A549 (cell line): ENCODE measurements at regions of chr15 and their contacts with region 1.

Region 1: DNA sequence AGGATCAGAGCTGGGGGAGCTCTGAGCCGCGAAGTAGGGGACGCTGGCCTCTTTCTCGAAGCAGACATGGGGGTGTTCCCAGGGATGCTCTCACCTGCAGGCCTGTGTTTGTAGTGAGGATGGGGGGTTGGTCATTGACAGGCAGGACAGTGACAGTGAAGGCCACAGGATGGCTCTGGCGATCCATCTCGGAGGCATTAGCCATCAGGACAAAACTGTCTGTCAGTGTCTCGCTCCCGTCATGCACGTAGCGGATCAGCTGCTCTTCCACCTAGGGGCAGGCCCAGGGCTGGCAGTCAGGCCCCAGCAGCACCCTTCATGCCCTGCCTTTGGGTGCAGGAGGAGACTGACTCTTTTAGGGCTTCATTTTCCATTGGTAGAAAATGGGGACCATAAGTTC is 28.0 kb downstream of the CSPG4 start:
- DNase-seq: peak in 1 of 2 experiments; percentile 47
- ATAC-seq: no peak
- H3K4me3 ChIP-seq: no peak overlapping the region
- H3K27ac ChIP-seq: no peak overlapping the region
- H3K4me1 ChIP-seq: no peaks in the 10 kb centered on the region
- CTCF ChIP-seq: no peak
- EP300 ChIP-seq: no peak
- POLR2A ChIP-seq: no peak
- RAD21 ChIP-seq: peak in 1 of 2 experiments; percentile 25; a peak in 1 of 5 replicates

Region 2: GRCh38 chr15:75508840-75509532 is 175.7 kb before region 1 on chr15:
- CTCF ChIA-PET with region 1: interaction called, 14 read pairs
- POLR2A ChIA-PET with region 1: no interaction called
- DNase-seq: peak; percentile 33 to 70
- ATAC-seq: peak; percentile 86 to 92
- H3K4me3 ChIP-seq: no peak overlapping the region
- H3K27ac ChIP-seq: no peak overlapping the region
- H3K4me1 ChIP-seq: no peaks in the 10 kb centered on the region
- CTCF ChIP-seq: peak; percentile 63
- EP300 ChIP-seq: no peak
- POLR2A ChIP-seq: no peak
- RAD21 ChIP-seq: peak; percentile 60 to 69

Region 3: GRCh38 chr15:75661091-75661777 is 23.4 kb before region 1 on chr15:
- CTCF ChIA-PET with region 1: interaction called, 237 read pairs
- POLR2A ChIA-PET with region 1: no interaction called
- DNase-seq: peak; percentile 83 to 84
- ATAC-seq: peak; percentile 80 to 94
- H3K4me3 ChIP-seq: no peak overlapping the region
- H3K27ac ChIP-seq: peak overlapping the region; percentile 78 to 83
- H3K4me1 ChIP-seq: peaks cover 57% of the 10 kb centered on the region
- CTCF ChIP-seq: no peak
- EP300 ChIP-seq: no peak
- POLR2A ChIP-seq: no peak
- RAD21 ChIP-seq: no peak; a peak in 1 of 5 replicates

Region 4: GRCh38 chr15:75723847-75724660 is 39.4 kb after region 1 on chr15:
- CTCF ChIA-PET with region 1: interaction called, 61 read pairs
- POLR2A ChIA-PET with region 1: no interaction called
- DNase-seq: peak; percentile 86 to 97
- ATAC-seq: peak; percentile 65 to 83
- H3K4me3 ChIP-seq: no peak overlapping the region
- H3K27ac ChIP-seq: peak overlapping the region; percentile 54 to 77
- H3K4me1 ChIP-seq: peaks cover 22% of the 10 kb centered on the region
- CTCF ChIP-seq: no peak
- EP300 ChIP-seq: no peak
- POLR2A ChIP-seq: no peak
- RAD21 ChIP-seq: no peak

Region 5: DNA sequence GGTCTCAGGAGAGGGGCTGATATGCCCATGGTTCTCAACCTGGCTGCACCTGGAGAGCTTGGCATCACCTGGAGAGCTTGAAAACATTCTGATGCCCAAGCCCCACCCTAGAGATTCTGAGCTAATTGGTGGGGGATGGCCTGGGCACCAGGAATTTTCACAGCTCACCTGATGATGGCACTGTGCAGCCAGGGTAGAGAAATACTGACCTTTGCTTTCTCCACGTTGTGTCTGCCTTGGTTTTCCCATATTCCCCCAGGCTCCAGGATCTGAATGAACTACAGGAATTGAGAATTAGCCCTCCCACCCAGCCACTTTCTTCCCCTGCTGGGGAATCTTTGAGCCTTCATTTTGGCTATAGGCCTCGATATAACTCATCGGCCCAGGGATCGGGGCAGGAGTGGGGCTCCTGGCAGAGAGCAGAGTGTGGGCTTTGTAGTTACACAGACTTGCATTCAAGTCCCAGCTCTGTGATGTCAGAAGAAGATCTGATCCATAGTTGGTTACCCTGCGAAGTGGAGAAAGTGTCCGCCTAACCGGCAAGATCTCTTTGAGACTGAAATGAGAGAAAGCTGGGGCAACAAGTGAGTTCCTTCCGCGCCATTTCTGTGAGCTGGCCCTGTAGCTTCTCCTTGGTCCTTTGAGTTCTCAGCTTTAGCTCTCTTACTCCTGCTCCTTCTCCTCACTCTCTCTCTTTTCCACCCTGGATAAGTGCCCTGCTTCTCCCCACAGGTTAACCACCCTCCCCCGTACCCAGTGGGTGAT is 125.5 kb after region 1 on chr15:
- CTCF ChIA-PET with region 1: interaction called, 130 read pairs
- POLR2A ChIA-PET with region 1: no interaction called
- DNase-seq: peak; percentile 55 to 65
- ATAC-seq: peak; percentile 79 to 92
- H3K4me3 ChIP-seq: no peak overlapping the region
- H3K27ac ChIP-seq: no peak overlapping the region
- H3K4me1 ChIP-seq: no peaks in the 10 kb centered on the region
- CTCF ChIP-seq: peak; percentile 65
- EP300 ChIP-seq: no peak
- POLR2A ChIP-seq: no peak
- RAD21 ChIP-seq: peak; percentile 79 to 85